CD8-positive, alpha-beta T cell (primary cell): ENCODE measurements at regions of chr3 and their contacts with region 1.

Region 1: GRCh38 chr3:67601911-67602608 is 52.4 kb downstream of the SUCLG2 start:
- DNase-seq: peak in 4 of 9 experiments; percentile 9 to 48 (median 14)
- ATAC-seq: peak; percentile 38
- H3K4me3 ChIP-seq: no peak overlapping the region
- H3K4me3 Mint-ChIP-seq: peak overlapping the region; percentile 74
- H3K27ac ChIP-seq: peak overlapping the region; percentile 16 to 55
- H3K27ac Mint-ChIP-seq: peak overlapping the region; percentile 90
- H3K4me1 ChIP-seq: peaks cover 76% of the 10 kb centered on the region
- H3K4me1 Mint-ChIP-seq: peaks cover 87% of the 10 kb centered on the region
- H3K27me3 ChIP-seq: no peaks in the 10 kb centered on the region
- H3K27me3 Mint-ChIP-seq: no peaks in the 10 kb centered on the region
- CTCF ChIP-seq: no peak

Region 2: DNA sequence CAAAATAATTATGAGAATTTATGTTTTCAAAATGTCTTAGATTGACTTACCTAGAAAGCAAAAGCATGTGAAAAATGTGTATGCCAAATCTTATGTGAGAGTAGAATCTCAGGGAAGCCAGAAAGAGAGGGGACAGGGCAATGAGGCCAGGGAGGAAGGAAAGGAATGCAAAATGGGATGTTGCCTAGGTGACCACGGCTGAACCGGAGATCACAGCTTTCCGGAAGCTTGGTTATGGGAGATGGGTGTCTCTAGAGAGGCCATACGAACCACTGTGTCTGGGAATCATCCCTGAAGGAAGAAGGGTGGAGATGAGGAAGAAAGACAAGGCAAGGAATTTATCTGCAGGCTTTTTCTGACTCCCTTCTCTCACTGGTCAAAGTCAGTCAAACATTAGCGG is 23.6 kb before region 1 on chr3:
- CTCF ChIA-PET with region 1: no interaction called
- POLR2A ChIA-PET with region 1: no interaction called
- intact Hi-C with region 1: no loop called
- DNase-seq: no peak
- ATAC-seq: no peak
- H3K4me3 ChIP-seq: no peak overlapping the region
- H3K4me3 Mint-ChIP-seq: no peak overlapping the region
- H3K27ac ChIP-seq: no peak overlapping the region
- H3K27ac Mint-ChIP-seq: peak overlapping the region; percentile 16
- H3K4me1 ChIP-seq: peaks cover 5% of the 10 kb centered on the region
- H3K4me1 Mint-ChIP-seq: peaks cover 42% of the 10 kb centered on the region
- H3K27me3 ChIP-seq: no peaks in the 10 kb centered on the region
- H3K27me3 Mint-ChIP-seq: no peaks in the 10 kb centered on the region
- CTCF ChIP-seq: no peak

Region 3: DNA sequence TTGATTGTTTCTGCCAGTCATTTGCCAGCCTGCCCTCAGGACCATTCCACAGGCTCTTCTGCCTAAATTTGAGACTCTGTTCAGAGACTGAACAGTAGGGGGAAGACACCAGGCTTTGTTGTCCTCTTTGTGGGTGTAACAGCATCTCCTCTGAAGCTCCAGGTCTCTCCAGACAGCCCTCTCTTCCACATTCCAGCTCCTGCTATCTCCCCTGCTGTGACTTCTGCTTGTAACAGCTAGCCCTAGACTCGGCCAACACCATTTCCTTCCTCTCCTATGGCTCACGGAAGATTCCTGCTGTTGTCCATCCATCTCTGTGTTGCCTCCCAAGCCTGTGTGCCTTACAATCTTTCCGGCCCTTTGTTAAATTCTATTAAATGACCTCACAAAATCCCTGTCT is 12.1 kb after region 1 on chr3:
- CTCF ChIA-PET with region 1: no interaction called
- POLR2A ChIA-PET with region 1: interaction called, 3 read pairs
- intact Hi-C with region 1: loop called in 1 of 2 experiments (anchors 2 kb)
- DNase-seq: no peak
- ATAC-seq: no peak
- H3K4me3 ChIP-seq: no peak overlapping the region
- H3K4me3 Mint-ChIP-seq: no peak overlapping the region
- H3K27ac ChIP-seq: no peak overlapping the region
- H3K27ac Mint-ChIP-seq: no peak overlapping the region
- H3K4me1 ChIP-seq: no peaks in the 10 kb centered on the region
- H3K4me1 Mint-ChIP-seq: peaks cover 39% of the 10 kb centered on the region
- H3K27me3 ChIP-seq: no peaks in the 10 kb centered on the region
- H3K27me3 Mint-ChIP-seq: no peaks in the 10 kb centered on the region
- CTCF ChIP-seq: no peak

Region 4: DNA sequence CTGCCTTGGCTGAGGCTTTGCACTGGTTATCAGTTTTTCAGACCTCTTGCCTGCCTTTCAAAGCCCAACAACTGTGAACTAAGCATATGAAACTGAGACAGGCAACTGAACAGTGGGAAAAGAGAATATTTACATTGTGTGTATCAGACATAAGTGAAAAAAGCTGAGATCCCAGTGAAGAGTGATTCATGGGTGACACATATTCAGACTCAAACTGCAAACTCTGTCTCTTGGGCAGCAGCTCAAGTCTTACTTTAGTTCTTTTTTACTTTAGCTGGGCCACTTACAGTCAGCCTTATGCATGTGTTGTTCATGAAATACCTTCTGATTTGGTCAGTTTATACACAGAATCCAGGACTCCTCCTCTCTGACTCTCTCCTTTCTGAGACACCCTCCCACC is 33.2 kb after region 1 on chr3:
- CTCF ChIA-PET with region 1: no interaction called
- POLR2A ChIA-PET with region 1: interaction called, 6 read pairs
- intact Hi-C with region 1: loop called in 1 of 2 experiments (anchors 5 kb)
- DNase-seq: no peak
- ATAC-seq: no peak
- H3K4me3 ChIP-seq: no peak overlapping the region
- H3K4me3 Mint-ChIP-seq: no peak overlapping the region
- H3K27ac ChIP-seq: no peak overlapping the region
- H3K27ac Mint-ChIP-seq: peak overlapping the region; percentile 11
- H3K4me1 ChIP-seq: peaks cover 37% of the 10 kb centered on the region
- H3K4me1 Mint-ChIP-seq: peaks cover 78% of the 10 kb centered on the region
- H3K27me3 ChIP-seq: no peaks in the 10 kb centered on the region
- H3K27me3 Mint-ChIP-seq: no peaks in the 10 kb centered on the region
- CTCF ChIP-seq: no peak